ENCODE measurements at regions of chr12 and their contacts with region 1.

Region 1: DNA sequence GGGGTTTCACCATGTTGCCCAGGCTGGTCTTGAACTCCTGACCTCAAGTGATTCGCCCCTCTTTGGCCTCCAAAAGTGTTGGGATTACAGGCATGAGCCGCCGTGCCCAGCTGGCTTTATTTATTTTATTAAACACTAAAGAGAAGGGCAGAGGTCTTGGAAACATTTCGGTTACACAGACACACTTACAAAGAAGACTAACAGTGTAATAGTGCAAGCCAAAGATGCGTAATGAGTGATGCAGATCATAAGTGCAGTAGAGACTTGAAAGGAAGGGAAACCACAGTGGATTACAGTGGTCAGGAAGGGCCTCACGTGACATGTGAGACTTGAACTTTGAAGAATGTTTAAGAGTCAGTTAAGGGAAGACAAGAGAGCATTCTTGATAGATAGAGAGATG is 33.9 kb upstream of the CDK17 start:
- DNase-seq: peak; percentile 85
- H3K4me3 Mint-ChIP-seq: peak overlapping the region; percentile 5
- H3K27ac Mint-ChIP-seq: peak overlapping the region; percentile 69
- H3K4me1 Mint-ChIP-seq: peaks cover 34% of the 10 kb centered on the region
- H3K27me3 Mint-ChIP-seq: no peaks in the 10 kb centered on the region

Region 2: GRCh38 chr12:95986635-95987570 is 447.2 kb before region 1 on chr12:
- CTCF ChIA-PET with region 1: no interaction called
- POLR2A ChIA-PET with region 1: no interaction called
- DNase-seq: no peak
- H3K4me3 Mint-ChIP-seq: no peak overlapping the region
- H3K27ac Mint-ChIP-seq: no peak overlapping the region
- H3K4me1 Mint-ChIP-seq: no peaks in the 10 kb centered on the region
- H3K27me3 Mint-ChIP-seq: no peaks in the 10 kb centered on the region

Region 3: DNA sequence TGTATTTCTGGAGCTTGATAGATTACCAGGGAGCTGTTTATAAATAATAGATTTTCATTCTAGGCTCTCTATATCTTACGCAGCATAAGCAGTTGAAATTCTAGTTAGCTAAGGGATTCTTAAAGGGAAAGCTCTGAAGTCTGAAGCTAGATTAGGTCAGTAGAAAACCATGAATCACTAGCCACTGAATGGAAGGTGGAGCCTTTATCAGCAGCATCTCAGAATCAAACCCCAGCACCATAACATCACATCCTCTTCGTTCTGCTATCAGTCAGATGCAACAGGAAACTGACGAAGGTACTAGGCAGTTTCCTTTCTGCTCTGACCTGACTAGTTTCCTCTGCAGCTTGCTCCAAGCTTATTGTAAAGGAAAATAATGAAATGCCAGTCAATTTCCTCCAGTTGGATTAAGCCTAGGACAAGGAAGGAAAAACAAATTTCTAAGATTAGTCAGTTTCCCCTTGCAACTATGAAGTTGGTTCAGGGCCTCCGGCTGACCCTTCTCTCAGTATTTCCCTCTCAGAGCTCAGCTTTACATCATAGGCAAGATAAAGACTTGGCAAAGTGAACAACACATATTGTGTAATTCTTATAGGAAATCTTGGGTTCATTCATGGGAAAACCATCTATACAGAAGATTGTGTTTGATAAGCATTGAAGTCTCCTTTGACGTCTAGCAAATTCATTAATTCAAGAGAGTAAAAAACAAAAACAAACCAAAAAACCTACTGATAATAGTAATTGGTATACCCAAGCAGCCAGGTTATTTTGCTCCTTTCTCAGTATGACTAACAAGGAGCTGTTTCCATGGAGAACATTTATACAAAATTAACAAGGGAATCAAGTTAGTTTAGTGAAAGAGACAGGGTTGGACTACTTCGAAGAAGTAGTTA is 11.8 kb after region 1 on chr12:
- CTCF ChIA-PET with region 1: interaction called, 5 read pairs
- POLR2A ChIA-PET with region 1: interaction called, 26 read pairs
- DNase-seq: peak; percentile 75
- H3K4me3 Mint-ChIP-seq: peak overlapping the region; percentile 49
- H3K27ac Mint-ChIP-seq: peak overlapping the region; percentile 95
- H3K4me1 Mint-ChIP-seq: peaks cover 52% of the 10 kb centered on the region
- H3K27me3 Mint-ChIP-seq: peaks cover 3% of the 10 kb centered on the region

Measured in activated CD4-positive, alpha-beta memory T cell treated with anti-CD3 and anti-CD28 coated beads, Interleukin-2, amount 10 ng/mL, durations not matched to agents 7 days and 5 days (primary cell).